ENCODE measurements at regions of chr18 and their contacts with region 1.

Region 1: DNA sequence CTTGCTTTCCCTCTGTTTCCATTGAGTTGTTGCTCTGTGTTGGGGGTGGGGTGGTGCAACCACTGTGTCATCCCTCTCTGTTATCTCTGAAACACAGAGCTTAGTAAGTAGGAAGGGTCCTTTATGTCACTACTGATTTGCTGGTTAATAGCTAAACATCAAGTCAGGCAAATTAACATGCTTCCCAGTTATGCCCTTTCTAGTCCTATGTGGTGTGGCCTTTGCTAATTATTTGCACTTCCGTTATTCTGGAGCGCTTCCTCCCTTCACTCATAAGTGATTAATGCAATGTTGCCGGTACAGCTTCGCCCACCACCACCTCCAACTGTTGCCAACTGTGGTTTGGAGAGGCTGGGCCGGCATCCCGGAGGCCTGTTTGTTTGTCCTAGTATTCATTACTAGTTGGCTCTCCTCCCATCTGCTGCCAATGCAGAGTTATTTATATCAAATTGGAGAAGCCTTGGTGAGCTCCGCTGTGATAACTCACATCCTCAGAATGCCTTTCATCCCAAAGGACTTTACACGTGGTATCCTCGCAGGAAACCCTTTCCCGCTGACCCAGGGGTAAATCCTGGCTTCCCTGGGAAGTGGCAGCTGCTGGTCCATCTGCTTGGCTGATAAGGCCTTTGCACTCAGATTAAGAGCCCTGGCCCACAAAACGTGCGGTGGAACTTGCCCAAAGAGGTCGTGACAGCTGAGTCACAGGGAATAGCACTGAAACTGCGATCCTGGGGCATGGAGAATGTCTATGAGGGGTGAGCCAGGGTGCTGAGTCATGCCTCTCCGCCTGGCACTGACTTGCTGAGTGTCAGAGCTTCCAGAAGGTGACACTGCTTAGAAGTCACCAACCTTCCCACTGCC is 72.0 kb upstream of the ZCCHC2 start:
- DNase-seq: peak; percentile 85 to 92
- ATAC-seq: peak; percentile 93 to 96 (median 94)
- H3K4me3 ChIP-seq: no peak overlapping the region
- H3K27ac ChIP-seq: peak overlapping the region; percentile 87
- H3K4me1 ChIP-seq: peaks cover 26% of the 10 kb centered on the region
- H3K27me3 ChIP-seq: no peaks in the 10 kb centered on the region
- CTCF ChIP-seq: no peak

Region 2: DNA sequence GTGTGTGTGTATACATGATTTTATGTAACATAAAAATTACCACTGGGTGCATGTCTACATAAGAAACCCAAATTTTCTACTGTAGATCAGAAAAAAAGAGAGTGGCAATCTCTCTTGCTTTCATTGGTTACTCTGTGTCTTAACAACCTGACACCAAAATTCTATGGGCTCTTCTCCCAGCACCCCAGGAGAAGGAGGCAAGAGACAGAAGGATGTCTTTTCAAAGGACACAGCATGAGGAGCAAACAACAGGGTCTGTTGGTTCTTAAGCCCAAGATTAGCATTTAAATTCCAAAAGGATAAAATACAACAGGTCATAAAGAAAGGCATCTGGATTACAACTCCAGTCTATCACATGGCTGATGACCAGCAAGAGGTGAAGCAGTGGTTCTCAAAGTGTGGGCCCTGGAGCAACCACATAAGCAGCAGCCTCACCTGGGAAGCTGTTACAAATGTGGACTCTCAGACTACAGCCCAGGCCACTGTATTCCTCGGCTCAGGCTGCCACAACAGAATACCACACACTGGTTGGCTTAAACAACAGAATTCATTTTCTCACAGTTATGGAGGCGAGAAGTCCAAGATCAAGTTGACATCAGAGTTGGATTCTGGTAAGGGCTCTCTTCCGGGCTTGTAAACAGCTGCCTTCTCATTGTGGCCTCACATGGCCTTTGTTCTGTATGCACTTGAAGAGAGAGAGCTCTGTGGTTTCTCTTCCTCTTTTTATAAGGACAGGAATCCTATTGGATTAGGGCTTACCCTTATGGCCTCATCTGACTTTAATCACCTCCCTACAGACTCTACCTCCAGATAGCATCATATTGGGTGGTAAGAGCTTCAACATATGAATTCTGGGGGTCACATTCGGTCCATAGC is 478.1 kb before region 1 on chr18:
- intact Hi-C with region 1: no loop called
- DNase-seq: no peak
- ATAC-seq: no peak
- H3K4me3 ChIP-seq: no peak overlapping the region
- H3K27ac ChIP-seq: no peak overlapping the region
- H3K4me1 ChIP-seq: no peaks in the 10 kb centered on the region
- H3K27me3 ChIP-seq: no peaks in the 10 kb centered on the region
- CTCF ChIP-seq: no peak

Region 3: GRCh38 chr18:62437235-62438017 is 13.3 kb before region 1 on chr18:
- intact Hi-C with region 1: loop called in 1 of 2 experiments (anchors 2 kb)
- DNase-seq: peak; percentile 92 to 97
- ATAC-seq: peak; percentile 89 to 94 (median 92)
- H3K4me3 ChIP-seq: peak overlapping the region; percentile 38
- H3K27ac ChIP-seq: peak overlapping the region; percentile 95
- H3K4me1 ChIP-seq: peaks cover 18% of the 10 kb centered on the region
- H3K27me3 ChIP-seq: no peaks in the 10 kb centered on the region
- CTCF ChIP-seq: no peak